CD4-positive, alpha-beta T cell (primary cell): ENCODE measurements at regions of chr3 and their contacts with region 1.

Region 1: DNA sequence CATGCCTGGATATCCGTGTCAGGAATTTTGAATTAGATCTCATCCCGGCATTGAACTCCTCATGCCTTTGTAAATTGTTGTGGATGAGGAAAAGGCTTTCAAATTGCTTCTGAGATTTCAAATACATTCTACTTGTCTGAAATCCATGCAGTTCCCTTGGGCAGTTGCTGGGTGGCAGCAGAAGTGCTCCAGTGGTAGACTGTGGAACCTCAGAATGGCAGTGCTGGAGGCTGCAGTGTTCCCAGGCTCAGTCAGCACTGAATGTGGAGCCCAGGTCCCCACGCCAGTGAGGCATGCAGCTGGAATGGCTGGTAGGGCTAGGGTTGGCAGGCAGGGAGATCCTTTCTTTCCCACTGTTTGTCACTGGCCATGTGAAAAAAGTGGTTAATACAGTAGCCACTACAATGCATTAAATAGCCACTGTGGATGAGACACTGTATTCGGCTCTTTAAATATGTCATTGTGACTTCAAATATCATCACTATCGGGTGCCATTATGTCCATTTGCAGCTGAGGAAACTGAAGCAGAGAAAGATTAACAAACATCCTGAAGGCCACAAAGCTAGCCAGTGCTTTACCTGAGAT is 98.6 kb downstream of the TPRG1 start:
- DNase-seq: peak in 13 of 14 experiments; percentile 4 to 64 (median 17)
- ATAC-seq: peak; percentile 49
- H3K4me3 ChIP-seq: no peak overlapping the region
- H3K4me3 Mint-ChIP-seq: no peak overlapping the region
- H3K27ac ChIP-seq: no peak overlapping the region
- H3K27ac Mint-ChIP-seq: no peak overlapping the region
- H3K4me1 ChIP-seq: peaks cover 6% of the 10 kb centered on the region
- H3K4me1 Mint-ChIP-seq: peaks cover 19% of the 10 kb centered on the region
- H3K27me3 ChIP-seq: no peaks in the 10 kb centered on the region
- H3K27me3 Mint-ChIP-seq: no peaks in the 10 kb centered on the region
- CTCF ChIP-seq: peak; percentile 58

Region 2: DNA sequence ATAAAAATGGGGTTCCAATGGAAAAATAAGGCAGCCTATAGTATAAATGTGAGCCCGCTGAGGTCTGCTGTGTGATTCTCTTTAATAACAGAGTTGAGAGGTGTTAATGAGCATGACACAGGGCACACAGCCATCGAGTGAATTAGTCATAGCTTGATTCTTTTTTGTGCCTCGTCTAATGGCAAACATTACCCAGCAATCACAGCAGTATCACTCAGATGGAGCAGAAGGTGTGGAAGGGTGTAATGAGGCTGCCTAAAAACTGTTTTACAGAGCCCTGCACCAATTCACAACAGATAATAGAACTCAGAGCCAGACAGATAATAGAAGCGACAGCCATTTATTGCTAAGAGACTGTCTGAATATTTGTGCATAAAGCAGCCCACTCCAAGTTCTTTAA is 277.2 kb before region 1 on chr3:
- CTCF ChIA-PET with region 1: no interaction called
- POLR2A ChIA-PET with region 1: no interaction called
- intact Hi-C with region 1: no loop called
- DNase-seq: no peak
- ATAC-seq: no peak
- H3K4me3 ChIP-seq: no peak overlapping the region
- H3K4me3 Mint-ChIP-seq: no peak overlapping the region
- H3K27ac ChIP-seq: no peak overlapping the region
- H3K27ac Mint-ChIP-seq: no peak overlapping the region
- H3K4me1 ChIP-seq: no peaks in the 10 kb centered on the region
- H3K4me1 Mint-ChIP-seq: no peaks in the 10 kb centered on the region
- H3K27me3 ChIP-seq: no peaks in the 10 kb centered on the region
- H3K27me3 Mint-ChIP-seq: peaks cover 20% of the 10 kb centered on the region
- CTCF ChIP-seq: no peak

Region 3: DNA sequence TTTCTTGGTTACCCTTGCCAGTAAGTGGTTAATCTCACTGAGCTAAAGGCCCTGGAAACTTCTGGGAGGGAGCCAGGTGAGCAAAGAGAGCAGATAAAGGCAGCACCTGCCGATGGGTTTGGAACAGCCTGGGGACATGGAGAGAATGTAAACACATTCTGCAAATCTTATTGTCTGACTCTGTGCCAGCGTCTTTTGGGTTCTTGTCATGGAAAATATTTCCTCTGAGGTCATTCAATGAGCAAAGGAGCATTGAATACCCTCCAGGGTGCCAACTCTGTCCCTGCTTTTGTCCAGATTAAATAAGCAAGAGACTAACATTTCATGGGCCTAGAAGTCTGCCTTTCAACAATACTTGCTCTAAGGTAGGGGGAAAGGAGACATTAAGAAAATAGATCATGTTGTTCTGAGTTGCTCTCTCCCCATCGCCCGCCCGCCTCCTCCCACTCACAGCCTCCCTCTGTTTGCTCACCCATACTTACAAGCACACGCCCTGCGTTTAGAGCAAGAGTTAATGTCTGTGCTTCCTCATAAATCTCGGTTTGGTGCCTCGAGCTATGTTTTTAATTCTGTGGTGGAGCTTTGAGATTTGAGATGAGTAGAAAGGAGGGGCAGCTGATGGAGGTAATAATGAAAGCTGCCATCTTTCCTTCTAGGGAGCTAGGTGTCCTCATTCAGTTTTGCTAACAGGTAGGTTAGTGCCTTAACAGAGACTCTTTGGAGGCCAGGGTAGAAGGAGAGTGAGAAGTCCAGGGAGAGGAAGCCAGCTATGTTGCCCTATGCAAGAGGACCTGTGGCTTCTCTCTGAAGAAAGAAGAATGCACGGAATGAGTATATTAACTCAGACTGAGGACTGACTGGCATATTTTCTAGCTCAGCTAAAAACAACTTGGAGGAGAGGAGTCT is 34.4 kb after region 1 on chr3:
- CTCF ChIA-PET with region 1: no interaction called
- POLR2A ChIA-PET with region 1: no interaction called
- intact Hi-C with region 1: no loop called
- DNase-seq: peak in 2 of 14 experiments; percentile 8 to 39
- ATAC-seq: peak; percentile 69
- H3K4me3 ChIP-seq: no peak overlapping the region
- H3K4me3 Mint-ChIP-seq: no peak overlapping the region
- H3K27ac ChIP-seq: no peak overlapping the region
- H3K27ac Mint-ChIP-seq: peak overlapping the region; percentile 65
- H3K4me1 ChIP-seq: peaks cover 8% of the 10 kb centered on the region
- H3K4me1 Mint-ChIP-seq: peaks cover 64% of the 10 kb centered on the region
- H3K27me3 ChIP-seq: no peaks in the 10 kb centered on the region
- H3K27me3 Mint-ChIP-seq: no peaks in the 10 kb centered on the region
- CTCF ChIP-seq: no peak

Region 4: DNA sequence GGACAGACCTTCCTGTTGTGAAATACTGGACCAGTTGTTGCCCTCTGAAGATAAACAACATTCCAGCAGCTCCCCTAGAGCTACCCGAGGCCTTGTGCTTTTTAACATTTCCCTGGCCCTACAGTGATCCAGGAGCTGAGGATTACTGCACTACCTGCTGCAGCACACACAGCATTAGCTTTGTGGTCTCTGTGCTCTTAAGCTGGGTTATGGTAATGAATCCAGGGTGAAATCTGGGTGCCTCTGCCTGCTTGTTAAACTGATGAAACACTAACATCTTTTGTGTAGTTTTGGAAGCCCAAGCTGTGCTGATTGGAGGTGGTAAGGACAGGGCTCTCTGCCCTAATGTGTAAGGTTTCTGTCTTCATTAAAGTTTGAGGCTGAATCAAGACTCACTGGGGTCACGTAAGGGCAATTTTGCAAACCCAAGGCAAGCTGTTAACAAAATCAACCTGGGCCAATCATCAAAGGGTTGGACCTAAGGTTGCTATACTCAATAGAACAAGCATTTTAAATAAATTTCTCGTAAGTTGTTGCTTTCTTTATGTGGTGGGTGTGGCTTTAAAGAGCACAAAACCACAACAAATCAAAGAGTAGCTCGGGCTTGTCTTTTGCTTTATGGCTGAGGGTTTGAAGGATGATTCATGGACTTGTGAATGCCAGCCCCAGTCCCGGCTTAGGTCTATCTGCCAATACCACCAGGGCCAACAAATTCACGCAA is 85.3 kb after region 1 on chr3:
- CTCF ChIA-PET with region 1: interaction called, 12 read pairs
- POLR2A ChIA-PET with region 1: interaction called, 5 read pairs
- intact Hi-C with region 1: loop called in 1 of 2 experiments (anchors 5 kb)
- DNase-seq: peak; percentile 14 to 80 (median 38)
- ATAC-seq: peak; percentile 83
- H3K4me3 ChIP-seq: peak overlapping the region; percentile 8
- H3K4me3 Mint-ChIP-seq: peak overlapping the region; percentile 52
- H3K27ac ChIP-seq: peak overlapping the region; percentile 13 to 48
- H3K27ac Mint-ChIP-seq: peak overlapping the region; percentile 90
- H3K4me1 ChIP-seq: peaks cover 19% of the 10 kb centered on the region
- H3K4me1 Mint-ChIP-seq: peaks cover 48% of the 10 kb centered on the region
- H3K27me3 ChIP-seq: no peaks in the 10 kb centered on the region
- H3K27me3 Mint-ChIP-seq: no peaks in the 10 kb centered on the region
- CTCF ChIP-seq: no peak

Region 5: DNA sequence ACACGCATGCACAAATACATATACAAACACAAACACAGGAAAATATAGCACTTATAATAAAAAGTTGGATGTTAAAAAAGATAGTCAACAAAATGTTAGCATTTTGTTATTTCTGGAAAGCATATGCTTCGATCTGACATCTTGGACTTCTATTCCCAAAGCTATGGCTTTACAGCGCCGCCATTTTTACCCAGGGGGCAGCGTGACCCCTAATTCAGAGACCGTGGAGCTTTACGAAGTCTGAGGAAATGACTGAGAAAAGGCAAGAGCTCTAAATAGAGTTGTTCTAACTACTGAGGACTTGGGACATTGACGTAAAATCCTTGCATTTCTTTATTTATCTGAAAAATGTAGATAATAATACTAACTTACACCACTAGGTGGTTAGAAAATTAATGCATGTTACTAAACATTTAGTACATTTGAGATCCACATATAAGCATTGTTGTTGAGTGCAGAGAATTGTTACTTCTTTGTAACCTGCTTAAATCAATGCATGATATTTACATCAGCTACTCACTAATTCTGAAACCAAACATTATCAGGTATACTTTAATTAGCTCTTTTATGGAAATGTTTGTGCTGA is 516.2 kb after region 1 on chr3:
- CTCF ChIA-PET with region 1: no interaction called
- POLR2A ChIA-PET with region 1: no interaction called
- intact Hi-C with region 1: loop called in 1 of 2 experiments (anchors 10 kb)
- DNase-seq: no peak
- ATAC-seq: no peak
- H3K4me3 ChIP-seq: no peak overlapping the region
- H3K4me3 Mint-ChIP-seq: no peak overlapping the region
- H3K27ac ChIP-seq: no peak overlapping the region
- H3K27ac Mint-ChIP-seq: no peak overlapping the region
- H3K4me1 ChIP-seq: no peaks in the 10 kb centered on the region
- H3K4me1 Mint-ChIP-seq: peaks cover 13% of the 10 kb centered on the region
- H3K27me3 ChIP-seq: no peaks in the 10 kb centered on the region
- H3K27me3 Mint-ChIP-seq: no peaks in the 10 kb centered on the region
- CTCF ChIP-seq: no peak

Region 6: DNA sequence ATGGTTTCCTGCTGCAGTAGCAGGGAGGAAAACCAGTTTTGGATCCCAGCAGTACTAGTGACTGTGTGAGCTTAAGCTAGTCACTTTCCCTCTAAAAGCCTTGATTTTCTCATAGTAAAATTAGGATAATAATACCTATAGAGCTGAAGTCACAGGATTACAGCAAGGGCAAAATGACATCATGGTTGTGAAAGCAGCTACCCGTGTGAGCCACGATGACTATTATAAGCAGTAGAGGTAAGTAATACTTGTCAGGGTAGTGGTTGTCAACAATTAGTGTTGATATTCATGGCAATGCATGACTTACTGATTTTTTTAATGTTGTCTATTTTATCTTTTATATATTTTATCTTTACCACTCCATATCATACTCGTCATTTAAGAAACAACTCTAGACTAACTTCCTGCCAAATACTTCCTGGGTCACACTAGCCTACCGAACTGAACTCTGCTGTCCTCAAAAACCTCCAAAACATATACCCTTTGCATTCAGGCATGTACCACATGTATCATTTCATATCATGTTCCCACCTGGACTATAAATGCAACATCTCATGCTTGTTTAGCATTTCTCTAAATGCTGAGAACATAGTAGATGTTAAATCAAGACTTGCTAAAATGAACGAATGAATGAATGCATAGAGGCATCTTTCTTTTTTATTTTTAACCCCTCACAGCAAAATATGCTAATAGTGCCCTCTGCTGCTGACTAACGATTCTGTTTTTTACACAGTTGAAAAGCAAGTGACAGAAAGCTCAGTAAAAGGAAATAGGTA is 677.8 kb after region 1 on chr3:
- CTCF ChIA-PET with region 1: interaction called, 6 read pairs
- POLR2A ChIA-PET with region 1: interaction called, 8 read pairs
- intact Hi-C with region 1: loop called (anchors 1 to 2 kb)
- DNase-seq: peak in 3 of 14 experiments; percentile 23 to 28 (median 26)
- ATAC-seq: no peak
- H3K4me3 ChIP-seq: no peak overlapping the region
- H3K4me3 Mint-ChIP-seq: no peak overlapping the region
- H3K27ac ChIP-seq: no peak overlapping the region
- H3K27ac Mint-ChIP-seq: no peak overlapping the region
- H3K4me1 ChIP-seq: no peaks in the 10 kb centered on the region
- H3K4me1 Mint-ChIP-seq: peaks cover 7% of the 10 kb centered on the region
- H3K27me3 ChIP-seq: no peaks in the 10 kb centered on the region
- H3K27me3 Mint-ChIP-seq: no peaks in the 10 kb centered on the region
- CTCF ChIP-seq: peak; percentile 47

Region 7: DNA sequence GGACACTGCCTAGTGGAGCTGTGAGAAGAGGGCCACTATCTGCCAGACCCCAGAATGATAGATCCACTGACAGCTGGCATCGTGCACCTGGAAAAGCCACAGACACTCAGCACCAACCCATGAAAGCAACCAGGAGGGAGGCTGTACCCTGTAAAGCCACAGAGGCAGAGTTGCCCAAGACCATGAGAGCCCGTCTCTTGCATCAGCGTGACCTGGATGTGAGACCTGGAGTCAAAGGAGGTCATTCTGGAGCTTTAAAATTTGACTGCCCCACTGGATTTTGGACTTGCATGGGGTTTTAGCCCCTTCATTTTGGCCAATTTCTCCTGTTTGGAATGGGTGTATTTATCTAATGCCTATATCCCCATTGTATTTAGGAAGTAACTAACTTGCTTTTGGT is 933.9 kb after region 1 on chr3:
- CTCF ChIA-PET with region 1: no interaction called
- POLR2A ChIA-PET with region 1: no interaction called
- intact Hi-C with region 1: loop called in 1 of 2 experiments (anchors 5 kb)
- DNase-seq: no peak
- ATAC-seq: no peak
- H3K4me3 ChIP-seq: no peak overlapping the region
- H3K4me3 Mint-ChIP-seq: no peak overlapping the region
- H3K27ac ChIP-seq: no peak overlapping the region
- H3K27ac Mint-ChIP-seq: no peak overlapping the region
- H3K4me1 ChIP-seq: no peaks in the 10 kb centered on the region
- H3K4me1 Mint-ChIP-seq: no peaks in the 10 kb centered on the region
- H3K27me3 ChIP-seq: peaks cover 0 to 2% of the 10 kb centered on the region in 2 experiments
- H3K27me3 Mint-ChIP-seq: peaks cover 32% of the 10 kb centered on the region
- CTCF ChIP-seq: no peak

Region 8: DNA sequence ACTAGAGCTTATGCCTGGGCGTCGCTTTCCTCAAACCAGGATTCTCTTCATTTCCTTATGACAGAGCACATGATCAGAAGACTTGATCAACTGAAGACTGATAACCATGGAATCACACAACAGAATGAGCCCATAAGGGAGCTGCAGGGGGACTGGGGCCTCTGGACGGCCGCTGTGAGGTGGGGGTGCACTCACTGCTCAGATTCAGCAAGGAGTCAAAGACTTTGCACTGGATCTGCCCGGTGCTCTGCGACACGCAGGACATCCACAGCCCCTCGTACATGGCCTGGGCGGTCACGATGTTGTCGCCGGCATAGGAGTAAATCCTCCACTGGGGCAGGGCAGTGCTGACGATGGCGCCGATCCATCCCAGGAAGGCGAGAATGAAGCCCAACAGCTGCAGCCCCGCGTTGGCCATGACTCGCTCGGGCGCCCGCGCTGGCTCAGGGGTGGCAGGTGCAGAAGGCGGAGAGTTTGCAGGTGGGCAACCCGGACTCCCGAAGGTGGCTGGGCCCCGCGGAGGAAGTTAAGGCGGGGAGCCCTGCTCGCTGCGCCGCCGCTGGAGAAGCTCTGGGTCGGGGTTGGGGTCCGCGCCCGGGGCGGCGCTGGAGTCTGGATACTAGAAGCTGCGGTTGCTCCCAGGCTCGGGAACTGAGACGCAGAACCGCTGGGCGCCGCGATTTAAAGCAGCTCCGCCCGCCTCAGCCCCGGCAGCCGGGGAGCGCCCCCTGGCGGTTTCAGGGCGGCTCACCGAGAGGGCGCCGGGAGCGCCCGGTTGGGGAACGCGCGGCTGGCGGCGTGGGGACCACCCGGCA is 1051.7 kb after region 1 on chr3 and contains the start of gene CLDN1:
- CTCF ChIA-PET with region 1: no interaction called
- POLR2A ChIA-PET with region 1: no interaction called
- intact Hi-C with region 1: loop called in 1 of 2 experiments (anchors 5 kb)
- DNase-seq: peak; percentile 51 to 82 (median 64)
- ATAC-seq: peak; percentile 85
- H3K4me3 ChIP-seq: peak within 1 kb of the TSS; percentile 53
- H3K4me3 Mint-ChIP-seq: peak within 1 kb of the TSS; percentile 71
- H3K27ac ChIP-seq: no peak within 1 kb of the TSS
- H3K27ac Mint-ChIP-seq: no peak within 1 kb of the TSS
- H3K4me1 ChIP-seq: peaks cover 16% of the 10 kb centered on the region
- H3K4me1 Mint-ChIP-seq: peaks cover 16% of the 10 kb centered on the region
- H3K27me3 ChIP-seq: peaks cover 0 to 13% of the 10 kb centered on the region in 2 experiments
- H3K27me3 Mint-ChIP-seq: peaks cover 42% of the 10 kb centered on the region
- CTCF ChIP-seq: peak; percentile 87
- total RNA-seq, gene CLDN1: 0.80 to 0.95 TPM